Caco-2 (cell line): ENCODE measurements at regions of chr9 and their contacts with region 1.

Region 1: GRCh38 chr9:125261501-125262293 is at the start of gene GAPVD1:
- DNase-seq: peak; percentile 95 to 96
- H3K4me3 ChIP-seq: peak within 1 kb of the TSS; percentile 96
- H3K4me3 Mint-ChIP-seq: peak within 1 kb of the TSS; percentile 79
- H3K27ac Mint-ChIP-seq: peak within 1 kb of the TSS; percentile 97
- H3K4me1 ChIP-seq: 0 out of 2 replicates have a peak, but pooled peaks cover 6% of the 10 kb centered on the region
- H3K4me1 Mint-ChIP-seq: peaks cover 17% of the 10 kb centered on the region
- H3K27me3 ChIP-seq: no peaks in the 10 kb centered on the region
- H3K27me3 Mint-ChIP-seq: no peaks in the 10 kb centered on the region
- CTCF ChIP-seq: peak; percentile 52
- total RNA-seq, gene GAPVD1: 66.2 TPM in 2 replicates

Region 2: GRCh38 chr9:125008599-125008998 is 253.1 kb before region 1 on chr9:
- CTCF ChIA-PET with region 1: no interaction called
- POLR2A ChIA-PET with region 1: no interaction called
- intact Hi-C with region 1: no loop called
- DNase-seq: no peak
- H3K4me3 ChIP-seq: no peak overlapping the region
- H3K4me3 Mint-ChIP-seq: no peak overlapping the region
- H3K27ac Mint-ChIP-seq: no peak overlapping the region
- H3K4me1 ChIP-seq: no peaks in the 10 kb centered on the region
- H3K4me1 Mint-ChIP-seq: no peaks in the 10 kb centered on the region
- H3K27me3 ChIP-seq: no peaks in the 10 kb centered on the region
- H3K27me3 Mint-ChIP-seq: no peaks in the 10 kb centered on the region
- CTCF ChIP-seq: no peak

Region 3: DNA sequence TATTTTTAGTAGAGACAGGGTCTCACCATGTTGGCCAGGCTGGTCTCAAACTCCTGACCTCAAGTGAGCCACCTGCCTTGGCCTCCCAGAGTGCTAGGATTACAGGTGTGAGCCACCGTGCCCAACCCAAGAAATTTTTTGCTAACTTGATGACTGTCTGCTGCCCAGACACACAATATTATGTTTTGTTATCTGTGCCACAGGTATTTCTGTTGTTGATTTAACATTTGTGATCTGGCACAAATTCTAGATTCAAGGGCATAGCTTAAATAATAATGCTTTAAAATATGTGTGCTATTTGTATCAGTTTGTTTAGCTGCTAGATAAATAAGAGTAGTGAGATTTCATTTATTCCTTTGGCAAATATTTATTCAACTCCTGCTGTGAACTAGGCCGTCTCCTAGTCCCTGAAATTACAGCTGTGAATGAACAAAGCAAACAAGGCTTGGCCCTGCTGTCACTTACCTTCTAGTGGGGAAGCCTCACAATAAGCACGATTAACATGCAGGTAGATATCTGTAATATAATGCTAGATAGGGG is 35.2 kb after region 1 on chr9:
- CTCF ChIA-PET with region 1: interaction called, 4 read pairs
- POLR2A ChIA-PET with region 1: interaction called, 6 read pairs
- intact Hi-C with region 1: loop called (anchors 1 kb)
- DNase-seq: peak; percentile 80 to 83
- H3K4me3 ChIP-seq: no peak overlapping the region
- H3K4me3 Mint-ChIP-seq: peak overlapping the region; percentile 39
- H3K27ac Mint-ChIP-seq: peak overlapping the region; percentile 63
- H3K4me1 ChIP-seq: peaks cover 29% of the 10 kb centered on the region
- H3K4me1 Mint-ChIP-seq: peaks cover 12% of the 10 kb centered on the region
- H3K27me3 ChIP-seq: no peaks in the 10 kb centered on the region
- H3K27me3 Mint-ChIP-seq: no peaks in the 10 kb centered on the region
- CTCF ChIP-seq: no peak

Region 4: DNA sequence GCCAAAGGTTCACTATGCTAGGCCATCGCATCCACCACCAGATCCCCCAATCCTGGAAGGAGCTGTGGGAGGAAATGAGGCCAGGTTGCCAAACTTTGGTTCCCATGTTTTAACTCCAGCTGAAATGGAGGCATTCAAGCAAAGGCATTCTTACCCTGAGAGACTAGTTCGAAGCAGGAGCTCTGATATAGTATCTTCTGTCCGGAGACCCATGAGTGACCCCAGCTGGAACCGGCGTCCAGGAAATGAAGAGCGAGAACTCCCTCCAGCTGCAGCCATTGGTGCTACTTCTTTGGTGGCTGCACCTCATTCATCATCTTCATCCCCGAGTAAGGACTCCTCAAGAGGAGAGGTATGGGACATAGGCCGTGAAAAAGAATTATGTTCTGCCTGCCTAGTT is 75.5 kb after region 1 on chr9:
- CTCF ChIA-PET with region 1: interaction called, 4 read pairs
- POLR2A ChIA-PET with region 1: no interaction called
- intact Hi-C with region 1: loop called (anchors 1 kb)
- DNase-seq: peak; percentile 47
- H3K4me3 ChIP-seq: no peak overlapping the region
- H3K4me3 Mint-ChIP-seq: no peak overlapping the region
- H3K27ac Mint-ChIP-seq: no peak overlapping the region
- H3K4me1 ChIP-seq: no peaks in the 10 kb centered on the region
- H3K4me1 Mint-ChIP-seq: no peaks in the 10 kb centered on the region
- H3K27me3 ChIP-seq: no peaks in the 10 kb centered on the region
- H3K27me3 Mint-ChIP-seq: no peaks in the 10 kb centered on the region
- CTCF ChIP-seq: peak in 1 of 2 experiments; percentile 23

Region 5: GRCh38 chr9:125513668-125514413 is 252.1 kb after region 1 on chr9:
- CTCF ChIA-PET with region 1: no interaction called
- POLR2A ChIA-PET with region 1: no interaction called
- intact Hi-C with region 1: no loop called
- DNase-seq: no peak
- H3K4me3 ChIP-seq: no peak overlapping the region
- H3K4me3 Mint-ChIP-seq: no peak overlapping the region
- H3K27ac Mint-ChIP-seq: no peak overlapping the region
- H3K4me1 ChIP-seq: peaks cover 19% of the 10 kb centered on the region
- H3K4me1 Mint-ChIP-seq: peaks cover 12% of the 10 kb centered on the region
- H3K27me3 ChIP-seq: no peaks in the 10 kb centered on the region
- H3K27me3 Mint-ChIP-seq: no peaks in the 10 kb centered on the region
- CTCF ChIP-seq: no peak